AG04450 (cell line): ENCODE measurements at regions of chr17 and their contacts with region 1.

Region 1: GRCh38 chr17:40474419-40475002 is 26.9 kb downstream of the TNS4 start:
- DNase-seq: no peak
- H3K4me3 ChIP-seq: no peak overlapping the region
- H3K27ac ChIP-seq: no peak overlapping the region
- H3K27me3 ChIP-seq: no peaks in the 10 kb centered on the region
- CTCF ChIP-seq: no peak

Region 2: GRCh38 chr17:40464392-40464855 is 10.1 kb before region 1 on chr17:
- CTCF ChIA-PET with region 1: interaction called, 8 read pairs
- POLR2A ChIA-PET with region 1: interaction called, 18 read pairs
- DNase-seq: no peak
- H3K4me3 ChIP-seq: no peak overlapping the region
- H3K27ac ChIP-seq: no peak overlapping the region
- H3K27me3 ChIP-seq: no peaks in the 10 kb centered on the region
- CTCF ChIP-seq: no peak

Region 3: GRCh38 chr17:40499551-40500174 is 25.2 kb after region 1 on chr17:
- CTCF ChIA-PET with region 1: interaction called, 12 read pairs
- POLR2A ChIA-PET with region 1: interaction called, 3 read pairs
- DNase-seq: no peak
- H3K4me3 ChIP-seq: no peak overlapping the region
- H3K27ac ChIP-seq: no peak overlapping the region
- H3K27me3 ChIP-seq: no peaks in the 10 kb centered on the region
- CTCF ChIP-seq: no peak

Region 4: DNA sequence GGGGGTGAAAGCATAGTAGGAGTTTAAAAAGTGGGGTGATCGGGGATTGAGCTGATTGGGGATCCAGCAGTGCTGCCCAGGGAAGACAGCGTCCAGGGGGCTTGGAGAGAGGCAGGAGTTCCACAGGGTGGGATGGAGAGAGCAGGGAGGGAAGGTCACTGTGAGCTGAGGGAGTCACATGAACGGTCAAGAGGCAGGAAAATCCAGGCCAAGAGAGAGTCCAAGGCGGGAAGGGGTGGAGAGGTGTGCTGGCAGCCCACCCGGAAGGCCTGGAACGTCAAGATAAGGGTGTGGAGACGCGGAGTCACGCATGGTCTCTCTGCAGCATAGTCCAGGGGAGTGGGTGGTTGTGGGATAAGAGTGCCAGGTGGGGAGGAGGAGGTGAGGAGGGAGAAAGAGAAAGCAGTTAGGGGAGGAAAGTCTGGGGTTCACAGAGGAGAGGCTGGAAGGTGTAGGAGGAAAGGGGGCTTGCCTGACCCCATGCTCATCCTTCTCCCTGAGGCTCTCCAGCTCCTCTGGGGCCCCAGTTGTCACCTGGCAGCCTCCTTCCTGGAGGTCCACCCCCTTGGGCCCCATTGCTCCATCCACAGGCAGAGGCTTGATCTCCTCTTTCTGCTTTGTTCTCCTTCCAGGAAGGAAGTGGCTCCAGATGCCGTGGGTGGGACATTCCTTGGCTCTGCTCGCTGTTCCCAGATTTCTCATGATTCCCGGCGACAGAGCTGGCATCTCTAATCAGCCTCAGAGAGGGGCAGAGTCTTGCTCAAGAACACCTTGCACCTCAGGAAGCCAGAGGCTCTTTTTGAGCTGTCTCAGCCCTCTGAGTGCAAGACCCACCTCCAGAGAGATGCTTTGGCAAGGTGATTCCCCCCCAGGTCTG is 62.0 kb after region 1 on chr17:
- CTCF ChIA-PET with region 1: interaction called, 94 read pairs
- POLR2A ChIA-PET with region 1: interaction called, 133 read pairs
- DNase-seq: no peak
- H3K4me3 ChIP-seq: no peak overlapping the region
- H3K27ac ChIP-seq: peak overlapping the region; percentile 47
- H3K27me3 ChIP-seq: no peaks in the 10 kb centered on the region
- CTCF ChIP-seq: no peak

Region 5: GRCh38 chr17:40559954-40560591 is 85.6 kb after region 1 on chr17:
- CTCF ChIA-PET with region 1: interaction called, 33 read pairs
- POLR2A ChIA-PET with region 1: interaction called, 16 read pairs
- DNase-seq: peak; percentile 89
- H3K4me3 ChIP-seq: no peak overlapping the region
- H3K27ac ChIP-seq: peak overlapping the region; percentile 77
- H3K27me3 ChIP-seq: peaks cover 19% of the 10 kb centered on the region
- CTCF ChIP-seq: peak; percentile 99

Region 6: DNA sequence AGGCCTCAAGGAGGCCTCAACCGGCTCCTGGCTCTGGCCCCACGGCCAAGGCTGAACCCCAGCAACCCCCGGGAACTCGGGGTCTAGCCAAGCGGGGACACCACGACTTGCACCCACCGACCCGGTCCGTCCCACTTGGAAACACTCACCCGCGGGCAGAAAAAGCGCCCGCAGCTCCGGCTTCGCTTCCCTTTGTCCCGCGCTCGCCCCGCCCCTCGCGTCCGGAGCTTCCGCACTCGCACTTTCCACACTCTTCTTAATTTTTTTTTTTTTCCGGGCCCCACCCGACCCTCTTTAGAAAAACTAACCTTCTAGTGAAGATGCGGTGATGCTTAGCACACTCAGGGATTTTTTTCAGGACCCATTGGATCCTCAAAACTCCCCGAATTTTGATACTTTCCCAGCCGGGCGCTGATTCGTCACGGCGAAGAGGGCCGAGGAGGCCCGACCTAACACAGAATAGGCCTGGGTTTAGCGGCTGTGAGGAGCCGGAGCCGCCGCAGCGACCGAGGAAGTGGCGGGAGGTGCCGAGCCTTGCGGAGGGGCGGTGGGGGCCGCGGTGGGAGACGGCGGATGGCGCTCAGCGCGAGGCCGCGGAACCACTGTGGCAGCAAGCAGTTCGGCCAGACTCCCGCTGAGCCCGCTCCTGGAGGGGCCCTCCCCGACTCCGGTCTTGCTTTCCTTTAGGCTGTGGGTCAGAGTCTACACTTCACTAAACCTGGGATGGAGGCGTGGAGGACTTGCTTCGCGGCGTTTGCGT is 173.3 kb after region 1 on chr17 and contains the start of gene SMARCE1:
- CTCF ChIA-PET with region 1: no interaction called
- POLR2A ChIA-PET with region 1: no interaction called
- DNase-seq: peak; percentile 24
- H3K4me3 ChIP-seq: peak within 1 kb of the TSS; percentile 86
- H3K27ac ChIP-seq: peak within 1 kb of the TSS; percentile 97
- H3K27me3 ChIP-seq: no peaks in the 10 kb centered on the region
- CTCF ChIP-seq: no peak
- polyA plus RNA-seq, gene SMARCE1: 93.3 and 111 TPM in 2 replicates